AG04450 (cell line): ENCODE measurements at regions of chr16 and their contacts with region 1.

Region 1: DNA sequence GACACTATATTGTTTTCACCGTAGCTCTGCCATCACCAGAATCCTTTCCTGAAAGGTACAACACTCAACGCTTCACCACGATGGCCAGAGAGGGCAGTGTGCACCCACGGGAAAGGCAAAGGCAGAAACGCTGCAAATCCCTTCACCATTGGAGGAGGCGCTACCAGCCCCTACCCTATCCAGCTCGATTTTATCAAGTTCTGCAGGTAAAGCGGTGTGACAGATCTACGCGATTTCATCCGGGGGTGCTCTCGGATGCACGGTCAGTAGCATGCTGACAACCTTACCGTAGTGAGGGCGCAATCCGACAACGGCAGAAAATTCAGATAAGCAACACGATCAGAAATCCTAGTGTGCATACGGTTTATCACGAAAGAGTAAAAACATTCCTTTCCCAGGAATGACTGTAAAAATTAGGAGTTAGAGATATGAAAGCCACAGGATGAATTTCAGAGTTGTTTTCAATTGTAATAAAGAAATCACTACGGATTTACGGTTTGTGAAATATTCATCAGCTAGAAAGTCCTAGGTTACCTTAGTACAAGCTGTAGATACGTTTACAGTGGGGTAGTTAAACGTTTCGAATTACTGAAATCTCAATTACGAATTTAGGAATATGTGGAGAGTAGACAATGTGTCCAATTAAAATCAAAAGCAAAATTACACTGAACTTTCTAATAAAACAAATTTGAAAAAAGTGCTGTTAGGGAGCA is 1.8 kb downstream of the NETO2 start:
- DNase-seq: peak; percentile 55
- H3K4me3 ChIP-seq: peak overlapping the region; percentile 68
- H3K27ac ChIP-seq: no peak overlapping the region
- H3K27me3 ChIP-seq: no peaks in the 10 kb centered on the region
- CTCF ChIP-seq: peak; percentile 99

Region 2: GRCh38 chr16:46428125-46429061 is 713.5 kb before region 1 on chr16:
- CTCF ChIA-PET with region 1: no interaction called
- POLR2A ChIA-PET with region 1: no interaction called
- DNase-seq: no peak
- H3K4me3 ChIP-seq: no peak overlapping the region
- H3K27ac ChIP-seq: no peak overlapping the region
- H3K27me3 ChIP-seq: peaks cover 3% of the 10 kb centered on the region
- CTCF ChIP-seq: no peak

Region 3: GRCh38 chr16:47037746-47038458 is 104.0 kb before region 1 on chr16:
- CTCF ChIA-PET with region 1: interaction called, 34 read pairs
- POLR2A ChIA-PET with region 1: interaction called, 3 read pairs
- DNase-seq: peak; percentile 44
- H3K4me3 ChIP-seq: peak overlapping the region; percentile 66
- H3K27ac ChIP-seq: no peak overlapping the region
- H3K27me3 ChIP-seq: peaks cover 11% of the 10 kb centered on the region
- CTCF ChIP-seq: peak; percentile 88

Region 4: GRCh38 chr16:47125757-47126156 is 16.2 kb before region 1 on chr16:
- CTCF ChIA-PET with region 1: interaction called, 43 read pairs
- POLR2A ChIA-PET with region 1: no interaction called
- DNase-seq: no peak
- H3K4me3 ChIP-seq: no peak overlapping the region
- H3K27ac ChIP-seq: no peak overlapping the region
- H3K27me3 ChIP-seq: no peaks in the 10 kb centered on the region
- CTCF ChIP-seq: no peak

Region 5: DNA sequence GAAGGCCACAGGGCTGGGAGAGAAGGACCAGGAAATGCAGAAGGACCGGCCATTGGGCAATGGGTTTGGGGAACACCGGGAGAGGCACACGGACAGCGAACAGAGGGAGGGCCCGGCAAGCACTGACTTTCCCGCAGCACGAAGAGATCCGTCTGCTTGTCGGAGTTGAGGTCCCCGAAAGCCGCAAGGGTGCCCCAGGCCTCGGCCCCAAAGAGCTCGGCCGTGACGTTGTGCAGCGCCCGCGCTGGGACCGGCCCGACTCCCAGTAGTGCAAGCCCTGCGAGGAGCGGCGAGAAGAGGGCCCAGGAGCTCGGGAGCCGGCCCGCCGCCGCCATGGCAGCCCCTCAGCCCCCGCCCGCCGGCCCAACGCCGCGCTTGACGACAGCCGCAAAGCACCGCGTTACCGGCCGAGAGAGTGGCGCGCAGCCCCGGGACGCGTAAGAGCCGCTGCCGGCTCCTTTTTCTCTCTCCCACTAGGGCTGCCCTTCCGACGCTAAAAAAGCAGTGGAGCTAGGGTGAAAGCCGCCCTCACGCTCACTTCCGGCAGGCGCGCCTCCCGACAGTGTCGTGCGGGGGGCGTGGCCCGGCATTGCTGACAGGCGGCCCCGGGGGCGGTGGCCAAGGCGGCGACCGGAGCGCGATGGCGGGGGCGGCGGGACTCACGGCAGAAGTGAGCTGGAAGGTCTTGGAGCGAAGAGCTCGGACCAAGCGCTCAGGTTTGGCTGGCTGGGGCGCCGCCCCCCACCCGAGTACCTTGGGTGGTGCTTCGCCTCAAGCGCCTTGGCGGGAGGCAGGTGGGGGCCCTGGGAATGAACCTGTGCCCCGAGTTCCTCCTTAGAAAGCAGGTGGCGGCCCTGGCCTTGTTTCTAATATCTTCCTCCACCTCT is 319.0 kb after region 1 on chr16 and contains the starts of genes ITFG1 and PHKB:
- CTCF ChIA-PET with region 1: interaction called, 11 read pairs
- POLR2A ChIA-PET with region 1: interaction called, 3 read pairs
- DNase-seq: peak; percentile 75
- H3K4me3 ChIP-seq: peak within 1 kb of the TSS; percentile 96
- H3K27ac ChIP-seq: peak within 1 kb of the TSS; percentile 100
- H3K27me3 ChIP-seq: no peaks in the 10 kb centered on the region
- CTCF ChIP-seq: no peak
- polyA plus RNA-seq, gene ITFG1: 103 and 125 TPM in 2 replicates
- polyA plus RNA-seq, gene PHKB: 68.3 and 78.7 TPM in 2 replicates

Region 6: DNA sequence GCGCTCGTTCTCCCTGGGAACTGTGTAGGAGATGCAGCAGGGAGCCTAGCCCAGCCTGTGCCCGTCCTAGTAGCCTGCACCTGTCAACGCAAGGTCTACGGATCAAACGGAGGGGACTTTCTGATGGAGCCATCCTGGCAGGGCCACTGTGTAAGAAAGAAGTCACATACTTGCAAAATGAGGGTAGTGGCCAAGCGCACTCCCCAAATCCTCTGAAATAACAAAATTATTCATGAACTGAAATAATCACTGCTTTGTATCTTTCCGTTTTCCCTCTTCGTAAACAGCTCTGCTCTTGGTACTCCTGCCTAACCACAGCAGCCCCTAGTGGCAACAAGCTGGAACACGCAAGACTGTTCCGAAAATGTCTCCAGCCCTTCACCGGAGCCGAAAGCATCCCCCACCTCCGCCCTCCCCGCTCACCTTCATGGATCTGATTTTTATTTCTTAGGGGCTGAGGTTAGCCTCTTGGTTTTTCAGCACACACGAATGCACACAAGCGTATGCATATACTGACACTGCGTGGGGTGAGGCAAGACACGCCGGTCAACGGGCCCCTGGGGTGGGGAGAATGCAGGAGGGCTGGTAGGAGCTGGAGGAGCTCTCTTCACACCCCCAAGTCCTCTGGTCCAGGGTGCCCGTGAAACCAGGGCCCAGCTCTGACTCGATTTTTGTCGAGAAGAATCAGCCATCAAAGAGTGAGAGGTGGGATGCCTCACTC is 913.1 kb after region 1 on chr16:
- CTCF ChIA-PET with region 1: interaction called, 38 read pairs
- POLR2A ChIA-PET with region 1: no interaction called
- DNase-seq: peak; percentile 36
- H3K4me3 ChIP-seq: peak overlapping the region; percentile 32
- H3K27ac ChIP-seq: no peak overlapping the region
- H3K27me3 ChIP-seq: no peaks in the 10 kb centered on the region
- CTCF ChIP-seq: peak; percentile 98

Region 7: DNA sequence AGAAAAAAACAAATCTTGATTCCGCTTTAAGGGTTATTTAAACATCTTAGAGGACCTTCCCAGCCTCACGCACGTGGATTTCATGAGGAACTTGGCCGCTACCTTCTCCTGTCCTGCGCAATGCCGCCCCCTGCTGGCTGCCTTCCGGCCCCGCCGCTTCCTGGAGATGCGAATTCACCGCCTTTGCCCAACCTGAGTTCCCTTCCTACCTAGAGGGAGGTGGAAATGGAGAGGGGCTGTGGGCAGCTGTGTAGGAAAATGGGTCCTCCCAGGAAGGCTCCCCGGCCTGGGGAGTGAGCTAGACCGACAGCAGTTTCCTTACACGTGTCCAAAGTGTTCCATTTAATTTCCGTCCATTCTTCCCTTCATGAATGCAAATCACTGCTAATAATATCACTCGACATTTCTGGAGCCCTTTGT is 1014.9 kb after region 1 on chr16:
- CTCF ChIA-PET with region 1: interaction called, 74 read pairs
- POLR2A ChIA-PET with region 1: no interaction called
- DNase-seq: peak; percentile 68
- H3K4me3 ChIP-seq: no peak overlapping the region
- H3K27ac ChIP-seq: no peak overlapping the region
- H3K27me3 ChIP-seq: no peaks in the 10 kb centered on the region
- CTCF ChIP-seq: peak; percentile 94